ENCODE measurements at regions of chr14 and their contacts with region 1.

Region 1: DNA sequence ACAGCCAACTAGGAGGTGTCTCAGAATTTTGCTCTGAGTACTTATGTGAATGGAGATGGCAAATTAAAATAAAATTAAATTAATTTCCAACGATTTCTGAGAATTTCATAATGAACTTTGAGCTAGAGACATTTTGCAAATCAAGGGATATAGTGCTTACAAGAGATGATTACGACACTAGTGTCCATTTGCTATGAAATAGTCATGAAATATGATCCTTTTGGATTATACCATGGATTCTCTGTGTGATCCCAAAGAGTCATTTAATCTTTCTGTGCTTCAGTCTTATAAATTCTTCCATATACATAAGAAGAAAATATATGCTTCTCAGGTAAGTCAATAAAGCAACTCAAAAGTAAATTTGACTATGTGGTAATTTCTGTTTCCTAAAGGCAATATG is 240.6 kb downstream of the SLC25A21 start:
- DNase-seq: no peak
- ATAC-seq: no peak
- H3K4me3 ChIP-seq: no peak overlapping the region
- H3K4me3 Mint-ChIP-seq: no peak overlapping the region
- H3K27ac ChIP-seq: no peak overlapping the region
- H3K27ac Mint-ChIP-seq: no peak overlapping the region
- H3K4me1 ChIP-seq: no peaks in the 10 kb centered on the region
- H3K4me1 Mint-ChIP-seq: no peaks in the 10 kb centered on the region
- H3K27me3 ChIP-seq: no peaks in the 10 kb centered on the region
- H3K27me3 Mint-ChIP-seq: peaks cover 2% of the 10 kb centered on the region
- CTCF ChIP-seq: no peak

Region 2: DNA sequence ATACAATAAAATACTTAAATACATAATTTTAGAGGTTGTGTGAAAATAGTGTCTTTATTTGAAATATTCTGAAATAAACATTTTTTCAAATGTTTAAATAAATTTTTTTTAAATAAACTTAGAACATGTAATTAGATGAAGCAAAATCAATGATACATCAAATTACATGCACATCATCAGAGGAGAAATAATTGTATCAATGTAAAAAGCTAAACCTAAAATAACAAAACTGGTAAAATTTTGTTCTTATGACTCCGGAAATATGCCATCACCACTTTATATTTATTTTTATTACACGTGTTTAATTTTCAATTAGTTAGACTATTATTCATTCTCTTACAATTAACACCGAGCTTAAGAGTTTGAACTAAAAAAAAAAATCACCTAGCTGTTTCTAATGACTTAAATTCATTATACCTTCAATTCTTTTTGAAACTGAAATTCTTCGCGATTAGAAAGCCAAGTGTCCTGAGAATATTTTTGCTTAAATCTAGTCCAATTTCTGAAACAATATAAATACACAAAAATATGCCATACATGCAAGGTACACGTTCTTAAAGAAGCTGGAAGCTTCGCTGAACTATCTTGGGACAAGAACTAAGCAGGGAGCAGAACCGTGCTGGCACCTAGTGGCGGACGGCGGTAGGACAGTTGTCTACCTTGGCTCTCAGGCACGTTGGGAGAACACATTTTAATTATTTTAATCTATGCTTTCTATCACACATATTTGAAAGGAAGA is 10.2 kb after region 1 on chr14:
- CTCF ChIA-PET with region 1: interaction called, 12 read pairs
- POLR2A ChIA-PET with region 1: no interaction called
- intact Hi-C with region 1: no loop called
- DNase-seq: peak in 8 of 9 experiments; percentile 3 to 48 (median 23)
- ATAC-seq: peak; percentile 51
- H3K4me3 ChIP-seq: no peak overlapping the region
- H3K4me3 Mint-ChIP-seq: no peak overlapping the region
- H3K27ac ChIP-seq: no peak overlapping the region
- H3K27ac Mint-ChIP-seq: no peak overlapping the region
- H3K4me1 ChIP-seq: no peaks in the 10 kb centered on the region
- H3K4me1 Mint-ChIP-seq: no peaks in the 10 kb centered on the region
- H3K27me3 ChIP-seq: no peaks in the 10 kb centered on the region
- H3K27me3 Mint-ChIP-seq: no peaks in the 10 kb centered on the region
- CTCF ChIP-seq: peak; percentile 91

Measured in CD8-positive, alpha-beta T cell (primary cell).